Activated CD8-positive, alpha-beta T cell treated with anti-CD3 and anti-CD28 coated beads for 36 hours (primary cell): ENCODE measurements at regions of chr1 and their contacts with region 1.

Region 1: GRCh38 chr1:206808615-206809014 is 36.3 kb upstream of the IL10 start:
- DNase-seq: peak; percentile 69
- ATAC-seq: peak; percentile 89
- H3K4me3 Mint-ChIP-seq: no peak overlapping the region
- H3K27ac Mint-ChIP-seq: no peak overlapping the region
- H3K4me1 Mint-ChIP-seq: peaks cover 49% of the 10 kb centered on the region
- H3K27me3 Mint-ChIP-seq: no peaks in the 10 kb centered on the region
- CTCF ChIP-seq: peak; percentile 69

Region 2: DNA sequence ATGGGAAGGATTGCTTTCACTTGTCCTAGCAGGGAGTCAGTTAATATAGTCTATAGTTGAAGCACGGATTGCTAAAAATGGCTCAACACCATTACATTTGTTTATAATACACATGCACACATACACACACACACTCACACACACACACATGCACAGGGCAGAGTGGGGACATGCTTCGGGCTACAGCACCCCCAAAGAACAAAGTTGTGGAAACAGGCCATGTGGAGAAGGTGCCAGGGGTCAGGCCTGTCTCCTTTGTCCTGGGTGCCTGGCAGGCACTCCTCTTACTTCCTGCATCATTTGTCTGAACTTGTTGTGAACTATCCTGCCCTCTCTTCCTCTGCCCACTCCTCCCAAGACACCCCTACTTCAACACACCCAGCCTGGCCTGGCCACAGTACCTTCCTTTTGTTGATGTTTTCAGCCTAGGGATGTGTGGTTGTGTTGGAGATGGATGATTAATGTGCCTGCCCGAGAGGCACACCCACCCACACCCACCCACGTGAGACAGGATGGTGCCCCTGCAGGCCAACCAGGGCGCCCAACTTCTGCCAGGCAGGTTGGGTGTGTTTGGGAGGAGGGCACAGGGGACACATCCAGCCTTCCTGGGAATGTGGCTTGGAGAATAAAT is 283.8 kb before region 1 on chr1:
- CTCF ChIA-PET with region 1: no interaction called
- POLR2A ChIA-PET with region 1: no interaction called
- intact Hi-C with region 1: no loop called
- DNase-seq: no peak
- ATAC-seq: peak; percentile 62
- H3K4me3 Mint-ChIP-seq: no peak overlapping the region
- H3K27ac Mint-ChIP-seq: no peak overlapping the region
- H3K4me1 Mint-ChIP-seq: peaks cover 5% of the 10 kb centered on the region
- H3K27me3 Mint-ChIP-seq: no peaks in the 10 kb centered on the region
- CTCF ChIP-seq: no peak

Region 3: DNA sequence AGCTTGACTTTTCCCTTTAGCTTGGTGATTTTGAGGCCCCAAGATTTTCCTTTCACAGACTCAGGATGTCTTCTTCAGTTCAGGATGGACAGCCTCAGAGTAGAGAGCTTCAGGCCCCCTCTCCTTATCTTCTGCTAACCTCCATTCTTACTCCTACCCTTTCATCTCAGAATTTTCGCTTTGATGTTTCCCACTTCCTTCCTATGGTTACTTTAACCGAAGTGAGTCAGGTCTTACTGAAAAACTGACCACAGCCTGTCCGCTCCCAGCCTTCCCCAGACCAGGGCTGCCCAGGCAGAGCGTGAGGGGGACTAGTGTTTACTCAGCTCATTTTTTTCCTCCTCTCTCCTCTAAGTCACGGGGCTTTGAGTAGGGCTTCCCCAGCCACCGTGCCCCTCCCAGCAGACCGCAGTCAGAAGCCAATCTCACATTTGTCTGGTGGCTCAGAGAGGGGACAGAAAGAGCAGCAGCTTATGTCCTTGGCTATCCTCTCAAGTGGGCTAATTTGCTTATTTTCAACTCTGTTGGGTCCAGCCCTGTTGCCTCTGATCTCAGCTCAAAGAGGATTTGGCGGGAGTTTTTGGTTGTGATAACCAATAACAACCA is 42.3 kb before region 1 on chr1:
- CTCF ChIA-PET with region 1: interaction called, 125 read pairs
- POLR2A ChIA-PET with region 1: interaction called, 6 read pairs
- intact Hi-C with region 1: loop called (anchors 5 kb)
- DNase-seq: peak; percentile 87
- ATAC-seq: peak; percentile 75
- H3K4me3 Mint-ChIP-seq: peak overlapping the region; percentile 47
- H3K27ac Mint-ChIP-seq: peak overlapping the region; percentile 65
- H3K4me1 Mint-ChIP-seq: peaks cover 65% of the 10 kb centered on the region
- H3K27me3 Mint-ChIP-seq: peaks cover 3% of the 10 kb centered on the region
- CTCF ChIP-seq: no peak

Region 4: DNA sequence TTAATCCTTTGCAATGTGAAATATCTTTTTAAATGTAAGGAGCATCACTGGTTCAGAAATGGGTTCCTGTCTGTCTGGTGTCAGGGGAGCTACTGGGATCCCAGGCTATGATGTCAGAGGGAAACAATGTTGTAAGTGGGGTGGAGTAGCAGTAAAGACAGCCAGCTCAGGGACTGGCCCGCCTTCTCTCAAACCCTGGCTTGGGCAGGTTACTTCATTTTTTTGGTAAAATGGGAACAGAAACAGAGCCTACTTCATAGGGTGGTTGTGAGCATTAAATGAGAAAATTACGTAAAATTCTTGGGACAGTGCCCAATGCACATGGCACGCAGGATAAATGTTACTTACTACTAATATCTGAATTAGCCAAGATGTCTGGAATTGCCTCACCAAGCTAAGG is 26.1 kb after region 1 on chr1:
- CTCF ChIA-PET with region 1: interaction called, 16 read pairs
- POLR2A ChIA-PET with region 1: interaction called, 4 read pairs
- intact Hi-C with region 1: no loop called
- DNase-seq: no peak
- ATAC-seq: no peak
- H3K4me3 Mint-ChIP-seq: no peak overlapping the region
- H3K27ac Mint-ChIP-seq: no peak overlapping the region
- H3K4me1 Mint-ChIP-seq: peaks cover 25% of the 10 kb centered on the region
- H3K27me3 Mint-ChIP-seq: peaks cover 4% of the 10 kb centered on the region
- CTCF ChIP-seq: no peak

Region 5: DNA sequence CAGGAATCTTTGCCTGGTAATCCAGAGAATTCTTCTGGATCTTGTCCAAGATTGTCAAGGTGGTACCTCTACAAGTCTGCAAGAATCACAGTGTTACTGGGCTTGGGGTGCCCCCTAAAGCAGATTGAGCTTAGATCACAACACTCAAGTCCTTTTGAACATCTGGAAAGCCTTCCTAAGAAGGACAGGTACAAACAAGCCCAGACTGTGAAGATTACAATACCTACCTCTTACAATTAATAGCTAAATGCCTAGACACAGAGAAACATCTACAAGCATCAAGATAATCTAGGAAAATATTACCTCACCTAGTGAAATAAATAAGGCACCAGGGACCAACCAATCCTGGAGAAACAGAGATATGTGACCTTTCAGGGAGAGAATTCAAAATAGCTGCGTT is 39.3 kb after region 1 on chr1:
- CTCF ChIA-PET with region 1: no interaction called
- POLR2A ChIA-PET with region 1: no interaction called
- intact Hi-C with region 1: no loop called
- DNase-seq: no peak
- ATAC-seq: no peak
- H3K4me3 Mint-ChIP-seq: no peak overlapping the region
- H3K27ac Mint-ChIP-seq: no peak overlapping the region
- H3K4me1 Mint-ChIP-seq: no peaks in the 10 kb centered on the region
- H3K27me3 Mint-ChIP-seq: no peaks in the 10 kb centered on the region
- CTCF ChIP-seq: no peak

Region 6: DNA sequence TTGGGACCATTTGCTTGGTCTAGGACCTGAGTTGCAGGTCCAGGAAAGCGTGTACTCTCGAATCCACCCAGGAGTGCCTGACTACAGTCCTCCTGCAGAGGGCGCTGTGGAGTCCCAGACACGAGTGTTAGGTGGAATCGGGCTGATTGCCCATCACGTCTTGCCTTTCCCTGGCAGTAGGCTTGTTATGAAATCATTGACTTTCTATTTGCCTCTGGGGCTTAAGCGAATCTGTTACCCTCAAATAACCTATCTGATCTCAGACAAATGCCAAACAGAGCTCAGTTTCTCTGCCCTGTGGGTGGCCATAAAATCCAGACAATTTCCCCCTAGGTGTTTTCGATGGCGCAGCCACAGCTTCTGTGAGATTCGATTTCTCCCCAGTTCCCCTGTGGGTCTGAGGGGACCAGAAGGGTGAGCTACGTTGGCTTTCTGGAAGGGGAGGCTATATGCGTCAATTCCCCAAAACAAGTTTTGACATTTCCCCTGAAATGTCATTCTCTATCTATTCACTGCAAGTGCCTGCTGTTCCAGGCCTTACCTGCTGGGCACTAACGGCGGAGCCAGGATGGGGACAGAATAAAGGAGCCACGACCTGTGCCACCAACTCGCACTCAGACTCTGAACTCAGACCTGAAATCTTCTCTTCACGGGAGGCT is 56.5 kb after region 1 on chr1 and contains the start of gene IL20:
- CTCF ChIA-PET with region 1: interaction called, 46 read pairs
- POLR2A ChIA-PET with region 1: no interaction called
- intact Hi-C with region 1: no loop called
- DNase-seq: peak; percentile 92
- ATAC-seq: peak; percentile 97
- H3K4me3 Mint-ChIP-seq: no peak within 1 kb of the TSS
- H3K27ac Mint-ChIP-seq: no peak within 1 kb of the TSS
- H3K4me1 Mint-ChIP-seq: peaks cover 12% of the 10 kb centered on the region
- H3K27me3 Mint-ChIP-seq: peaks cover 2% of the 10 kb centered on the region
- CTCF ChIP-seq: peak; percentile 98
- total RNA-seq, gene IL20: not detected

Region 7: GRCh38 chr1:206925106-206925736 is 116.6 kb after region 1 on chr1:
- CTCF ChIA-PET with region 1: interaction called, 196 read pairs
- POLR2A ChIA-PET with region 1: no interaction called
- intact Hi-C with region 1: no loop called
- DNase-seq: peak; percentile 93
- ATAC-seq: peak; percentile 67
- H3K4me3 Mint-ChIP-seq: no peak overlapping the region
- H3K27ac Mint-ChIP-seq: no peak overlapping the region
- H3K4me1 Mint-ChIP-seq: peaks cover 41% of the 10 kb centered on the region
- H3K27me3 Mint-ChIP-seq: no peaks in the 10 kb centered on the region
- CTCF ChIP-seq: no peak

Region 8: DNA sequence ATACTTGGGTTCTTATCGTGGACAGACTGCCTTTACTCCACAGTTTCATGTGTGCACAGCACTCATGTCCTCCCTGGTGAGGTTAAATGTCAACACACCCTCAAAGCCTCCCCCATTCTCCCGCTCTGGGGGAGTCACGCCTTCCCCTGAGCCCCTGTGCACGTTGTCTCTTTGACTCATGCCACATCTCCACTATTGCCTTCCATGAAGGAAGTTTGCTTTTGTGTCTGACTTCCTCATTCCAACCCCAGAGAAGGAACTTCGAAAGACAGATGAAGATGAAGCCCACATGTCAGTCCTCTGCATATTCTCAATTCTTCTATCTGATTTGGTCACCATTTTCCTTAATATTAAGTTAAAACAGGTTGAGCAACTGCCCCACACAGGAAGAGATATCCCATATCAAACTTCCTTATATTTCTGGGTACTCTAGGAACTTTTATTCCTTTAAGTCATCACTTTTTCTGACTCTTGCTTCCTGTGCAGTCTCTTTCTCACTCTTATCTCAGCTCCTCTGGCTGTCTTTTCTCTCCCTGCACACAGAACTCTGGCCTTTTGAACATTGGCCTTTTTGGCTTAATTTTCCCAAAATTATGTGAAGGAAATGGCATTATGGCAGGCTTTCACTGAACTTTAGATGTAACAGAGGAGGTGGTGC is 336.9 kb after region 1 on chr1:
- CTCF ChIA-PET with region 1: no interaction called
- POLR2A ChIA-PET with region 1: no interaction called
- intact Hi-C with region 1: no loop called
- DNase-seq: no peak
- ATAC-seq: no peak
- H3K4me3 Mint-ChIP-seq: no peak overlapping the region
- H3K27ac Mint-ChIP-seq: no peak overlapping the region
- H3K4me1 Mint-ChIP-seq: no peaks in the 10 kb centered on the region
- H3K27me3 Mint-ChIP-seq: no peaks in the 10 kb centered on the region
- CTCF ChIP-seq: no peak